Activated T-helper 2 cell treated with anti-CD3 and anti-CD28 coated beads, Interferon-gamma antibody, Interleukin-2, Interleukin-4, amounts not matched to agents 10 μg/mL and 5 μg/mL and 100 μg/mL, durations not matched to agents 14 hours and 24 hours and 36 hours (primary cell): ENCODE measurements at regions of chr3 and their contacts with region 1.

Region 1: DNA sequence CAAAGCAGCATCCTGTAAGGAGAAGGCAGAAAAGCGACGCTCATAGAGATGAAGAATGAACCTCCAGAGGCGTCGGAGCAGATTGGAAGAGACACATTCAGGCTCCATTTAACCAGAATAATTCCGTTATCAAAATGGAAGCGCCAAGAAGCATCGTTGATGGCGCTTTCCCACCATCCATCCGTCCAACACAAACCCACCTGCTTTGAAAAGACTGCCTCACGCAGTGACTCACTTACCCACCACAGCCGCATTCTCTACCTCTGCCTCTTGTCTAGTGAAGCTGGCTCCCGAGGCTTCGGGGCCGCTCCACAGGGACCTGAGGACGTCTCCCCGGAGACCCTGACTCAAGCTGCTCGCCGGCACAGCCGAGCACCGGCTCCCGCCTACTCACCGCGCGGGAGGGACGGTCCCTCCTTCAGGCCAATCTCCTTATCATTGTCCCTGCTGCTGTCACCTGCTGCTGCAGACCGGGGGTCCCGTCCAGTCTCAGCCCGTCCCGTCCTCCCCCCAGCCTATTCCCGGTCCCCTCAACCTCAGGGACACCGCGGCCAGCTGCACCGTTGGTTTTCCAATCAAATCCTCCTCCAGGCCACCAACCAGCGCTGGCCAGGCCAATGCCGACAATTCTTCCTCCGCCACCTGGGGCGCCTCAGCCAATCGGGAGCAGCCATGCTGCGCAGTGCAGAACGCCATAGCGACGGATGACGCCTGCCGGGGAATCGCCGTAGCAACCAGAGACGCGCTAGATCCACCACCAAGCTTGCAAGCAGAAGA is at the start of gene NEK10:
- DNase-seq: peak; percentile 89
- H3K4me3 Mint-ChIP-seq: peak within 1 kb of the TSS; percentile 92
- H3K27ac Mint-ChIP-seq: peak within 1 kb of the TSS; percentile 48
- H3K4me1 Mint-ChIP-seq: peaks cover 15% of the 10 kb centered on the region
- H3K27me3 Mint-ChIP-seq: peaks cover 2% of the 10 kb centered on the region
- total RNA-seq, gene NEK10: 0.80 and 0.84 TPM in 2 replicates

Region 2: DNA sequence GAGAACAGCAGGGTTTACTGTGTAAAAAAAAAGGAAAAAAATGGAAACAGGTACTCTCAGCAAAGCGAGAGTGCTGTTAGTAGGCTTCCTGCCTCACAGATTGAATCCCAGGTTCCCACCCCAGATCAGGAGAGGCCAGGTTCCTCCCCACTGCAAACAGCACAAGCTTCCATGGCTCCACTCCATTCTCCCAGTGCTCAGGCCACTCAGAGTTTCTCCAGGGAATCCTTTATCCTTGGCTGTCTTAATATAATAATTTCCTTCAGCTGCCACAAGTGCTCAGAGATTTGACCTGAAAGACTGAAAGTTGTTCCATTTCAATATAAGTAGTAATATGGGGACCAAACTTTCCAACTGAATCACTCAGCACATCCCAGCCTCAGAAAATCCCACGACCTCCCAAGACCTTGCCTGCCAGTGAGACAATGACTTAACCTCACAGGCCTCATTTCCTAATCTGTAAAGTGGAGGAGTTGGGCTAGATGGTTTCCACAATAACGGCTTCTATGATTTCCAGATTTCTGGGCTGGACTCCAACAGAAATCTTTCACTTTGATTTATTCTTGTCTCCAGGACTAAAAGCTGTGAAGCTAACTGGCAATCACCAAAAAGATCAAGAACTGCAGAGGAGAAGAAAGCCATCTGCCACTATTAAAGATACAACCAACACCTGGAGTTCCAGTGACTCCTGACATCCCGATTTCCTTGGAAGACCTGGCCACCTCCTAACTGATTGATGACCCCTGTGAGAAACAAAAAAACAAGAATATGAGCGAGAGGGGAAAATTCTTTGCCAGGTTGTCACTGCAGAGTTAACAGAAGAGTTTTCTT is 289.4 kb before region 1 on chr3:
- intact Hi-C with region 1: no loop called
- DNase-seq: no peak
- H3K4me3 Mint-ChIP-seq: no peak overlapping the region
- H3K27ac Mint-ChIP-seq: no peak overlapping the region
- H3K4me1 Mint-ChIP-seq: no peaks in the 10 kb centered on the region
- H3K27me3 Mint-ChIP-seq: no peaks in the 10 kb centered on the region

Region 3: GRCh38 chr3:27254896-27255295 is 114.1 kb before region 1 on chr3:
- intact Hi-C with region 1: no loop called
- DNase-seq: no peak
- H3K4me3 Mint-ChIP-seq: no peak overlapping the region
- H3K27ac Mint-ChIP-seq: no peak overlapping the region
- H3K4me1 Mint-ChIP-seq: no peaks in the 10 kb centered on the region
- H3K27me3 Mint-ChIP-seq: no peaks in the 10 kb centered on the region

Region 4: DNA sequence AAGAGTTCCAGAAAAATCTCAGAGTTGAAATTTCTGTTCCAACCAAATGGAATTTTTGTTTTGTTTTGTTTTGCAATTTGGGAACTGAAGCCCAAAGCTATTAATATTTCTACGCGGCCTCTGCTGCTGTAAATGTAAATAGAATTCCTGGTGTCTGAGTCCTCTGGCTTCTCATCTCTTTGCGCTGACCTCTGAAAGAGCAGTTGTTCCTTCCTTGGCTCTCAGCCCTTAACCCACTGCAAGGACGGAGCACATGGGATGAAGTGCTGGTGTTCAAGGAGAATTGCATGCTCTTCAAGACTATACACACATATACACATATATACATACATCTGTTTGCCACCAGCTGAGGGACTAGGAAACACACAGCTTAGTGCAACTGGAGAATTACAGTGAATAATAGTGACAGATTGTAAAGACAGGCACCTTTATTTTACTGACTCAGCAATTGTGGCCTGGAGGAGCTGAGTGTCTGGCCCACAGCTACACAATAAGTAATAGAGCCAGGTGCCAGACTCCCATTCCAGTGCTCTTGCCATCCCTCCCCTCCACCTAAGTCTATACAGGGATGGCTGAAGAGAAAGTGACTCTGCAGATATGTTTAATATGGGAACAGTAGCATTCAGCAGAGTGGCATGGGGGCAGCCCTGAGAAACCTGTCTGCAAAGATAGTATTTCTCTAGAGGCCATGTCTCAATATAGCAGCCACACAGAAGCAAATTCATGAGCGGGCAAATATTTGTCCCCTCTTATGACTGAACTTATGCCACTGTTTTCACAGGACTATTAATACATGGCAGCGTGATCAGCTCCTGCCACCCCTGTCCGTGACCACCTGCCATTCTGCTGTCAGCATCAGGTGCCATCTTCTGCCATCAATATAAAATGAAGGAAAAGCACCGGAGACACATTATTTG is 42.1 kb before region 1 on chr3:
- intact Hi-C with region 1: no loop called
- DNase-seq: no peak
- H3K4me3 Mint-ChIP-seq: no peak overlapping the region
- H3K27ac Mint-ChIP-seq: no peak overlapping the region
- H3K4me1 Mint-ChIP-seq: peaks cover 7% of the 10 kb centered on the region
- H3K27me3 Mint-ChIP-seq: no peaks in the 10 kb centered on the region

Region 5: GRCh38 chr3:27357665-27358258 is 11.3 kb before region 1 on chr3:
- intact Hi-C with region 1: loop called (anchors 1 kb)
- DNase-seq: peak; percentile 39
- H3K4me3 Mint-ChIP-seq: no peak overlapping the region
- H3K27ac Mint-ChIP-seq: no peak overlapping the region
- H3K4me1 Mint-ChIP-seq: peaks cover 35% of the 10 kb centered on the region
- H3K27me3 Mint-ChIP-seq: peaks cover 2% of the 10 kb centered on the region